Posterior vena cava (tissue), 2 donors: ENCODE measurements at regions of chr16 and their contacts with region 1.

Region 1: DNA sequence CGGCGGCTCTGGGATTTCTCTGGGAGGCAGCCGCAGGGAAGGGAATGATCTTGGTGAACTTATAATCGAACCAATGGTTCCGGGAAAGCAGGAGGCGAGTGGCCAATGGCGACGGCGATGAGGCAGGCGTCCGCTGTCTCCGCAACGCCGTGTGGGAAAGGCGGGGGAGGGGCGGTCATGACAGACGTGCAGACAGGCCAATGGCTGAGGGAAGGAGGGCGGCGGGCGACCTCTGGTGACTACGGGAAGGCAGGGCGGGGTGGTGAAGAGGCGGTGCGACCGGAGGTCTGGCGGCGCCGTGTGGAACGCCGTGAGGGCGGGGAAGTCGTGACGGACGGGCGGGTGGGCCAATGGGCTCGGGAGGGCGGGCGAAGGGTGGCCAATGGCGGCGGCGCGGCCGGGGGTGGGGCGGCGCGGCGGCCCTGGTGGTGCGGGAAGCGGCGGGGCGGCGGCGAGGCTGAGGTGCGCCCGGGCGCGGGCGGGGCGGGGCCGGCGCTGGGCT is at the start of gene RAB40C:
- DNase-seq: peak; percentile 100
- total RNA-seq, gene RAB40C: 13.0 to 13.6 TPM

Region 2: DNA sequence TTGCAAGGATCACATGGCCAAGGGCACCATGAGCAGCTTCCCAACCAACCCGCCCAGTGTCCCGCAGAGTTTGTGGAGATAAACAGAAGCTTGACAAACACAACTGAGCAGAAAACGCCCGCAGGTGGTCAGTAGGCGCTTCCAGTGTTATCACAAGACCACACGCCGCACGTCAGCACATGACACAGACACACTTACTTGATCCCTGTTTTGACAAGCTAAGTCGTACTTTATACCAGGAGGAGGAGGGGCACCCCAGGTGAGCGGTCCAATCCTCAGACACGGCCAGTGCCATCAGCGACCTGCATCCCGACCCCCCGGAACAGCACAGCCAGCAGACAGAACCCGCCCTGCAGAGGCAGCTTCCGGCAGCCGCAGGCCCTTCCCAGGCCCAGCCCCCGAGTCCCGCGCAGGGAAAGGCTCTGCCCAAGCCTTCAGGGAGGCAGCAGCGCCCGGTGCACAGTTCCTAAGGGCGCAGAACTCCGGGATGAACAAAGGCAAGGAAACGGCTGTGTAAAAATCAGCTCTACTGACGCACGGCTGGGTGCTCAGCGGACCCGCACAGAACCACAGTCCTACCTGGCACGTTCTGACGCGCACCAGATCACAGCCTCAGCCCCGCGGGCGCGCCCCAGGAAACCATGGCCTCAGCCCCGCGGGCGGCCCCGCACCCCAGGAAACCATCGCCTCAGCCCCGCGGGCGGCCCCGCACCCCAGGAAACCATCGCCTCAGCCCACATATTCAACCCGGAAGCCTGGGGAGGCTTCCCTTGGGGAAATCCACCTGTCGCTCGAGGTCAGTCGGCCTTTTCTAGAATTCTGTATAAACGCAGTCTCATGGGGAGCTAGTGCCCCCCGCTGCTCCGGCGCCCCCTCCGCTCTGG is 265.0 kb before region 1 on chr16:
- intact Hi-C with region 1: no loop called
- DNase-seq: no peak

Region 3: GRCh38 chr16:630815-631405 is 41.2 kb after region 1 on chr16 and contains the start of gene WFIKKN1:
- intact Hi-C with region 1: loop called in 1 of 2 experiments (anchors 5 kb)
- DNase-seq: peak; percentile 85
- total RNA-seq, gene WFIKKN1: 0.14 TPM

Region 4: GRCh38 chr16:648781-649589 is 59.3 kb after region 1 on chr16 and contains the start of gene WDR90:
- intact Hi-C with region 1: loop called (anchors 2 to 5 kb)
- DNase-seq: peak; percentile 98
- total RNA-seq, gene WDR90: 13.4 to 14.9 TPM

Region 5: DNA sequence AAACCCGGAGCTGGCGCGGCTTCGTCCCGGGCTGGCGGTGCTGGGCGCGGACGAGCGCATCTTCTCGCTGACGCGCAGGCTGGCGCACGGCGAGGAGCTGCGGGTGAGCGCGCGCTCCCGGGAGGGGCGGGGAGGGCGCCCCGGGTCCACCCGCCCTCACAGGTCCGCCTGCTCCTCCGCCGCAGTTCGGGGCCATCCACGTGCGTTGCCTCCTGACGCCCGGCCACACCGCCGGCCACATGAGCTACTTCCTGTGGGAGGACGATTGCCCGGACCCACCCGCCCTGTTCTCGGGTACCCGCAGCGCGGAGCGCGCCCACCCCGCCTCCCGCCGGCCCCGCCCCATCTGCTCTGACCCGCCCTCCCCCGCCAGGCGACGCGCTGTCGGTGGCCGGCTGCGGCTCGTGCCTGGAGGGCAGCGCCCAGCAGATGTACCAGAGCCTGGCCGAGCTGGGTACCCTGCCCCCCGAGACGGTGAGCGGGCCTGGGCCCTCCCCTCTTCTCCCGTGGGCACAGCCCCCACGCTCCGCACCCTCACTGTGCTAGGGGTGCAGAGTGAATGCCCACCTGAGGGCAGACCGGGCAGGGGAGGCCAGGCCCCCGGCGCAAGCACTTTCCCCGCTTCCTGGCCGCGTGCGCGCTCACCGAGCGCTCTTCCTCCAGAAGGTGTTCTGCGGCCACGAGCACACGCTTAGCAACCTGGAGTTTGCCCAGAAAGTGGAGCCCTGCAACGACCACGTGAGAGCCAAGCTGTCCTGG is 138.6 kb after region 1 on chr16:
- intact Hi-C with region 1: no loop called
- DNase-seq: peak; percentile 91

Region 6: GRCh38 chr16:768428-768827 is 178.7 kb after region 1 on chr16:
- intact Hi-C with region 1: no loop called
- DNase-seq: no peak